HEK293T (cell line): ENCODE measurements at regions of chr2 and their contacts with region 1.

Region 1: DNA sequence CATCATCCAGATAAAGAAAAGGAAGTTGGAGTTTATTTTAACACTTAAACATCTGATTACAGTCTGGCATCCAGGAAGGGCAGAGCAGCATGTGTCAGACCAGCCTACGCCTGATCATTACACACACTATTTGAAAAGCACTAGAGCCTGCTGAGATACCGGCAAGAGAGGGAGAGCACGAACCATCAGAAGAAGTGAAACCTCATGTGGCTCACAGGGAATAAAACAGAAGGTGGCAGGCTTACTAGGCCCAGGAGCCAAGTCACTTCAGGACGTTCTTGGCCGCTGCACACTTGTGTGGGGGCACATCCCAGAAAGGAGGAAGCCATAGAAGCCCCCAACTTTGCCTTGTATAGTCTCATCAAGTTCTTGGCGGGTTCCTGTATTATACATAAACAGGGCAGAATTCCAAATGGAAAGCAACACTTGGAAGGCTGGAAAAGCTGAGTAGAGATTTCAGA is 105.5 kb downstream of the UGGT1 start:
- DNase-seq: no peak

Region 2: GRCh38 chr2:128134573-128134972 is 61.9 kb before region 1 on chr2:
- CTCF ChIA-PET with region 1: no interaction called
- POLR2A ChIA-PET with region 1: no interaction called
- DNase-seq: no peak

Region 3: GRCh38 chr2:128178650-128179460 is 17.6 kb before region 1 on chr2:
- CTCF ChIA-PET with region 1: no interaction called
- POLR2A ChIA-PET with region 1: no interaction called
- DNase-seq: peak; percentile 48

Region 4: DNA sequence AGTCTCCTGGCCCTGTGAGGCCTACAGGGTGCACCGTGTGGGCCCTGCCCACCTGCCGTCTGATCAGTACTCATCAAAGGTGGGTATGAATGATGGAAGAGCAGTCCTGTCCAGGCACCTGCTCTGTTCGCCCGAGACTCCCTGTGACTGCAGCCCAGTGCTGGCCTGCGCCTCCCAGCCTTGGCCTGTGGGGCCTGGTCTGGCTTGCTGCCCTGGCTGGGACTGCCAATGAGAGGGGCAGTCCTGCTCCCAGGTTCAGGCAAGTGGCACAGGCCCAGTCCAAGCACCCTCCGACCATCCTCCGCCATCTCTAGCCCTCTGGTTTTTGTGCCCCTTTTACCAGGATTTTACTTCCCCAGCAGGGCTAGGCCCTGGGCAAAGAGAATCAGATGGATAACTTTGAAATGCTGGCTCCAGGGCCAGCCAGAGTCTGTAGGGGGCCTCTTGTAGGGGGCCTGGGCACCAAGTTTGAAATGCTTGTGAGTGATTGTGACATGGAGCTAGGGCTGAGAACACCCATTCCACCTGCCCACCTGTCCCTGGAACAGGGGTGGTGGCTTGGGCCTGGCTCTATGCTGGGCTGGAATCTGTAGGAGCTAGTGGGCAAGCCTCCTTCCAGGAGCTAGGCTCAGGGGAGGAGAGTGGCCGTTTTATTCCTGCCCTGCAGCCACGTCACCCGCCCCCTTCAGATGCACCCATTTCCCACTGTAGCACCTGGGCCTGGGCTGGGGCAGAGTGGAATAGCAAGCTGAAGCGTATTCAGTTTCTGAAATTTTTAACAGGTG is 130.9 kb after region 1 on chr2:
- CTCF ChIA-PET with region 1: interaction called, 13 read pairs
- POLR2A ChIA-PET with region 1: no interaction called
- DNase-seq: no peak